ENCODE measurements at regions of chrX and their contacts with region 1.

Region 1: DNA sequence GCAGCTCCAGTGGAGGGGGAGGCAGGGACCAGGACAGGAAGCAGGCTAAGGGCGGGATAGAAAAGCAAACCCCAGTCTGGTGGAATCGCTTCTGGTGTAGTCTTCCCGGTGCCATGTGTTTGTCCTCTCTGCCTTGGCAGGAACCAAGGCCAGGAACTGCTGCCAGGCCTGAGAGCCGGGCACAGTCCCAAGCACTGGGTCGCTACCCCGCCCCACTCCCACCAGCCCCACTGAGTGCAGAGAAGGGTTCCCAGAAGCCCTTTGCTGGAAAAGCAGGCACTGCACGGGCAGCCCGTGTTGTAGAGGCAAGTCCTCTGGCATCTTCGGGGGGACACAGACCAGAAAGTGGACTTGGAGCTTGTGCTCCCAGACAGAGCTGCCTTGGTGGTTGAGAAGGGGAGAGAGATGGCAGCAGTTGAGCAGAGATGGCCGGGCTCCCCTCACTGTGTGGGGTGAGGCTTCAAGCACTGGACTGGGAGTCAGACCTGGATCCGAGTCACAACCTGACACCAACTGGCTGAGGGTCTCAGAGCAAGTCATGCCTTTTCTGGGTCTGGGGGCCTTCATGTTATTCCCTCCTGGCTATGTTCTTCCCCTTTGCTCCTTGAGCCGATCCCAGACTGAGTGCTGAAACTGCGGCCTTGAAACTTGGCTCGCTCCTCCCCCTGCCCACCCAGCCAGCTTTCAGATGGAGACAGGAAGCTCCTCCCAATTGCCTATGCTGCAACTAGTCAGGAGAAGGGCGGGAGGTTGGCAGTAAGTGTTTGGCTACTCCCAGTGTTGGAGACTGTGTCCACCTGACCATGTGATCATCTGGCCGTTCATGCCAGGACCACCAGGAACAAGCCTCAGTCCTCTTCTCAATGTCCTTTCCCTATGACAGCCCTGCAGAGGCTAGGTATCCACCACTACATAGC is 59.7 kb upstream of the MTM1 start:
- DNase-seq: peak; percentile 48 to 56
- ATAC-seq: peak; percentile 54 to 92 (median 86)
- H3K4me3 ChIP-seq: peak overlapping the region in 5 of 10 donors; percentile 5 to 28 (median 14)
- H3K27ac ChIP-seq: peak overlapping the region in 9 of 10 donors; percentile 32 to 85 (median 75)
- H3K4me1 ChIP-seq: peaks cover 0 to 47% (median 11%) of the 10 kb centered on the region in 9 donors
- H3K27me3 ChIP-seq: no peaks in the 10 kb centered on the region
- CTCF ChIP-seq: no peak

Region 2: DNA sequence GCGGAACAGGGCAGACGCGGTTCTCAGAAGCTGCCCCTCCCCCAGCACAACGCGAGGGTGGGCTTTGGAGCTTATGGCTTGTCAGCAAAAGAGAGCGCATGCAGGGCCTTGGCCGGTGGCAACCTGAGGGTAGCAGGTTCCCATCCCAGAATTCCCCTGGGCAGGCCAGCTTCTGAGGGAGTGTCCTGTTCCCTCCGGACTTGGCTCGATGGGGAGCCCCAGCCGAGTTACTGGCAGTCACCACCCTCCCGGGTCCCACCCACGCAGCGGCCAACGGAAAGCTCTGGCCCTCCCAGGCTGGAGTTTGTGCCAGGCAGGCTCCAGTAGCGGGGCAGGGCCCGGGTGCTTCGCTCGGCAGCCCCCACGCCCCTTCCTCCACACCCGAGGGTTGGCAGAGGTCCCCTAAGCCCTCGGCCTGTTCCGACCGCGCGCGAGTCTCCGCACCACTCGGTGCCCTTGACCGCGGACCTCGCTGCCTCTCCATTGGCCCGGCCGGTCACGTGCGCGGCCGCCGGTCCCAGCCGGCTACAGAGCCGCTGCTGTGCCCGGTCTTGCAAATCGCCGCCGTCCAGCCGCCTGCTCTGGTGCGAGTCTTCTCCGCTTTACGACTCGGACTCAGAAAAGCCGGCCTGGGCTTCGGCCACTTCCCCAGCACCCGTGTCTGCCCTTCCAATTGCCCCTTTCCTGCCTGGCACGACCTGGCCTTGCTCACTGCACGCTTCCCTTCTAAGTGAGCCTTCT is 38.8 kb after region 1 on chrX:
- intact Hi-C with region 1: loop called in 1 of 10 experiments (anchors 5 kb)
- DNase-seq: peak; percentile 57 to 75
- ATAC-seq: peak; percentile 85 to 93 (median 90)
- H3K4me3 ChIP-seq: peak overlapping the region in 9 of 10 donors; percentile 9 to 55 (median 42)
- H3K27ac ChIP-seq: peak overlapping the region; percentile 66 to 88 (median 76)
- H3K4me1 ChIP-seq: peaks cover 0 to 43% (median 11%) of the 10 kb centered on the region in 9 donors
- H3K27me3 ChIP-seq: peaks cover 0 to 4% (median 0%) of the 10 kb centered on the region in 7 donors
- CTCF ChIP-seq: no peak

Region 3: DNA sequence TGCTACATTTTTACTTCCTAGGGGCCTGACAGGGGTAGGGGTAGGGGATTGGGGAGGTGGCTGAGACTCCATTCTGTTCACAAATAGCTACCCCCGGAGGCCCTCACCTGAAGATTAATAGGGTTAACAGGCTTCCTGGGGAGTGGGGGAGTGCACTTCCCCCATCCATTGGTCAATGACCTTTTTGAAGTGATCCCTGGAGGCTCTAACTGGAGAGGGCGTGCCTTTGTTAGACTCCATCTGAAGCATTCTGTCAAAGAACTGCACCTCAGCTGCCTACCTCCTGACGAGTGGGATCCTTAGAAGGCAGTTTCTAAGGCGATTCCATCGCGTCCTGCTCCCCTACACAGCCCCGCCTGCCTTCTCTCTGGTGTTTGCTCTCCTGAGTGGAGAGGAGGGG is 49.7 kb after region 1 on chrX:
- intact Hi-C with region 1: no loop called
- DNase-seq: no peak
- ATAC-seq: peak in 2 of 8 donors; percentile 37 to 42
- H3K4me3 ChIP-seq: no peak overlapping the region
- H3K27ac ChIP-seq: peak overlapping the region in 1 of 10 donors; percentile 16
- H3K4me1 ChIP-seq: no peaks in the 10 kb centered on the region
- H3K27me3 ChIP-seq: no peaks in the 10 kb centered on the region
- CTCF ChIP-seq: no peak

Region 4: GRCh38 chrX:150568320-150569154 is 59.8 kb after region 1 on chrX and contains the start of gene MTM1:
- intact Hi-C with region 1: loop called in 2 of 10 experiments (anchors 2 to 10 kb)
- DNase-seq: peak; percentile 94
- ATAC-seq: peak; percentile 98 to 99 (median 98)
- H3K4me3 ChIP-seq: peak within 1 kb of the TSS; percentile 47 to 85 (median 73)
- H3K27ac ChIP-seq: peak within 1 kb of the TSS; percentile 61 to 94 (median 88)
- H3K4me1 ChIP-seq: peaks cover 0 to 45% (median 20%) of the 10 kb centered on the region in 9 donors
- H3K27me3 ChIP-seq: no peaks in the 10 kb centered on the region
- CTCF ChIP-seq: no peak
- total RNA-seq, gene MTM1: 9.2 to 14.0 (median 11.2) TPM

Region 5: GRCh38 chrX:150575416-150575808 is 66.7 kb after region 1 on chrX:
- intact Hi-C with region 1: loop called in 1 of 10 experiments (anchors 10 kb)
- DNase-seq: no peak
- ATAC-seq: no peak
- H3K4me3 ChIP-seq: peak overlapping the region in 1 of 10 donors; percentile 22
- H3K27ac ChIP-seq: peak overlapping the region in 1 of 10 donors; percentile 63
- H3K4me1 ChIP-seq: peaks cover 0 to 56% (median 15%) of the 10 kb centered on the region in 9 donors
- H3K27me3 ChIP-seq: no peaks in the 10 kb centered on the region
- CTCF ChIP-seq: no peak